Activated T-helper 2 cell treated with anti-CD3 and anti-CD28 coated beads, Interferon-gamma antibody, Interleukin-2, Interleukin-4, amounts not matched to agents 10 μg/mL and 5 μg/mL and 100 μg/mL, durations not matched to agents 14 hours and 24 hours and 36 hours (primary cell): ENCODE measurements at regions of chr10 and their contacts with region 1.

Region 1: GRCh38 chr10:100185364-100186252 is at the start of gene ERLIN1:
- DNase-seq: peak; percentile 90
- H3K4me3 Mint-ChIP-seq: peak within 1 kb of the TSS; percentile 99
- H3K27ac Mint-ChIP-seq: peak within 1 kb of the TSS; percentile 94
- H3K4me1 Mint-ChIP-seq: peaks cover 55% of the 10 kb centered on the region
- H3K27me3 Mint-ChIP-seq: no peaks in the 10 kb centered on the region
- total RNA-seq, gene ERLIN1: 18.2 and 19.4 TPM in 2 replicates

Region 2: GRCh38 chr10:99993701-99994689 is 191.6 kb before region 1 on chr10:
- intact Hi-C with region 1: no loop called
- DNase-seq: peak; percentile 38
- H3K4me3 Mint-ChIP-seq: no peak overlapping the region
- H3K27ac Mint-ChIP-seq: no peak overlapping the region
- H3K4me1 Mint-ChIP-seq: peaks cover 11% of the 10 kb centered on the region
- H3K27me3 Mint-ChIP-seq: peaks cover 2% of the 10 kb centered on the region

Region 3: DNA sequence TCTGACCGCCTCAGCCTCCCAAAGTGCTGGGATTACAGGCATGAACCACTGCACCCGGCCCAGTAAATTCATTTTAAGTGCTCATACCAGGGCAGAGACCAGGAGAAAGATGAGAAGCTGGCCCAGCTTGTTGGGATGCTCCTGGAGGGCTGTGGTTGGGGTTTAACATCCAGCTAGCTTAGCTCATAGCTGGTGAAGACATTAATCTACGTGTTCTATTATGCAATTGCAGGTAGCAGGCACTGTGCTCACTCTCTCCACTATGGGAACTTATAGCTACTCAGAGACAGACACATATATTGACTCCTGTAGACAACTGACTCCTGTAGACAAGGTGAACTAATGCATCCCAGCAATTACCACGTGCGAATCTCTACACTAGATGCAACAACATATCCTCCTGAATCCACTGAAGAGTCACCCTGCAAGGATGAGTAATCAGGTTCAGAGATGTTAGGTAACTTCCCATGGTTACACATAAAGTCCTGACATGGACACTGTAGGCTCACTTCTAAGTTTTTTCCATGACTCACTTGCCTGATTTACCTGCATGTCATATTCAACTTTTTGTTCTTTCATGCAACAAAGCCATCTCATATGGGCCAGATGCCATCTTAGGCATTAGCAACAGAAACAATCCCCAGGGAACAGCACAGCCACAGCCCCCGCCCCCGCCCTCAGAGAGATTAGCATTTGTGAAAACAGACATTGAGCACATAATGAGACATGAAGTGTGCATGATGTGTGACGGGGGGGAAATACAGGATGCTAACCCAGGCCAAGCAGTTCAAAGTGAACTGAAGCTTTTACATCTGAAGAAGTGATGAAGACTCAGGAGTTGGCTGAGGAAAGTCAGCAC is 37.0 kb before region 1 on chr10:
- intact Hi-C with region 1: loop called (anchors 5 kb)
- DNase-seq: no peak
- H3K4me3 Mint-ChIP-seq: no peak overlapping the region
- H3K27ac Mint-ChIP-seq: peak overlapping the region; percentile 56
- H3K4me1 Mint-ChIP-seq: peaks cover 13% of the 10 kb centered on the region
- H3K27me3 Mint-ChIP-seq: no peaks in the 10 kb centered on the region

Region 4: GRCh38 chr10:100167553-100168312 is 17.9 kb before region 1 on chr10:
- intact Hi-C with region 1: loop called (anchors 2 kb)
- DNase-seq: no peak
- H3K4me3 Mint-ChIP-seq: peak overlapping the region; percentile 68
- H3K27ac Mint-ChIP-seq: peak overlapping the region; percentile 77
- H3K4me1 Mint-ChIP-seq: peaks cover 28% of the 10 kb centered on the region
- H3K27me3 Mint-ChIP-seq: no peaks in the 10 kb centered on the region

Region 5: GRCh38 chr10:100229819-100230422 is 44.3 kb after region 1 on chr10:
- intact Hi-C with region 1: loop called (anchors 1 kb)
- DNase-seq: no peak
- H3K4me3 Mint-ChIP-seq: peak overlapping the region; percentile 91
- H3K27ac Mint-ChIP-seq: peak overlapping the region; percentile 84
- H3K4me1 Mint-ChIP-seq: peaks cover 23% of the 10 kb centered on the region
- H3K27me3 Mint-ChIP-seq: no peaks in the 10 kb centered on the region

Region 6: GRCh38 chr10:100254191-100254590 is 68.6 kb after region 1 on chr10:
- intact Hi-C with region 1: no loop called
- DNase-seq: no peak
- H3K4me3 Mint-ChIP-seq: no peak overlapping the region
- H3K27ac Mint-ChIP-seq: no peak overlapping the region
- H3K4me1 Mint-ChIP-seq: peaks cover 1% of the 10 kb centered on the region
- H3K27me3 Mint-ChIP-seq: no peaks in the 10 kb centered on the region

Region 7: GRCh38 chr10:100286051-100287033 is 100.7 kb after region 1 on chr10 and contains the start of gene BLOC1S2:
- intact Hi-C with region 1: loop called (anchors 2 kb)
- DNase-seq: peak; percentile 88
- H3K4me3 Mint-ChIP-seq: peak within 1 kb of the TSS; percentile 99
- H3K27ac Mint-ChIP-seq: peak within 1 kb of the TSS; percentile 99
- H3K4me1 Mint-ChIP-seq: peaks cover 19% of the 10 kb centered on the region
- H3K27me3 Mint-ChIP-seq: no peaks in the 10 kb centered on the region
- total RNA-seq, gene BLOC1S2: 49.1 and 56.3 TPM in 2 replicates

Region 8: DNA sequence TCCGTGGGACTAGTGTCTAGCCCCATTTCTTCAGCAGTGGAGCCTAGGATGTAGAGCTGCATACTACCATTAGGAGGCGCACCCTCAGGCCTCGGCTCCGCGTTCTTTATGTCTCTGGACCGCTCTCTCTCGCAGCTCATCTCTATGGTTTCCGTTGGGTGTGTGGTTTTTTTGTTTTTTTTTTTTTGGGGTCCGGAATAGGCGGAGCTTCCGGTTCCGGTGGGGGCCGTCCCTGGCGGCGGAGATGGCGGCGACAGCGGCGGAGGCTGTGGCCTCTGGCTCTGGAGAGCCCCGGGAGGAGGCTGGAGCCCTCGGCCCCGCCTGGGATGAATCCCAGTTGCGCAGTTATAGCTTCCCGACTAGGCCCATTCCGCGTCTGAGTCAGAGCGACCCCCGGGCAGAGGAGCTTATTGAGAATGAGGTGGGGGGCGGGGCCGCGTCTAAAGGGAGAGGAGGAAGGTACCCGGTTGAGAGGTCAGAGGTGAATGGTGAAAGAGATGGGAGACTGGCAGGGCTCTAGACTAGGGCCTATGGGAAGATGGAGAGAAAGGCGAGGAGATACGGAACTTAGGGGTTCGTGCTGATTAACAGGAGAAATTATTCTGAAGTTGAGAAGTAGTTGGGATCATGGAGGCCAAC is 350.2 kb after region 1 on chr10 and contains the start of gene HIF1AN:
- intact Hi-C with region 1: loop called (anchors 1 kb)
- DNase-seq: peak; percentile 90
- H3K4me3 Mint-ChIP-seq: no peak within 1 kb of the TSS
- H3K27ac Mint-ChIP-seq: peak within 1 kb of the TSS; percentile 12
- H3K4me1 Mint-ChIP-seq: peaks cover 28% of the 10 kb centered on the region
- H3K27me3 Mint-ChIP-seq: no peaks in the 10 kb centered on the region
- total RNA-seq, gene HIF1AN: 46.7 and 47.9 TPM in 2 replicates